Spleen (tissue), 13 donors: ENCODE measurements at regions of chr22 and their contacts with region 1.

Region 1: DNA sequence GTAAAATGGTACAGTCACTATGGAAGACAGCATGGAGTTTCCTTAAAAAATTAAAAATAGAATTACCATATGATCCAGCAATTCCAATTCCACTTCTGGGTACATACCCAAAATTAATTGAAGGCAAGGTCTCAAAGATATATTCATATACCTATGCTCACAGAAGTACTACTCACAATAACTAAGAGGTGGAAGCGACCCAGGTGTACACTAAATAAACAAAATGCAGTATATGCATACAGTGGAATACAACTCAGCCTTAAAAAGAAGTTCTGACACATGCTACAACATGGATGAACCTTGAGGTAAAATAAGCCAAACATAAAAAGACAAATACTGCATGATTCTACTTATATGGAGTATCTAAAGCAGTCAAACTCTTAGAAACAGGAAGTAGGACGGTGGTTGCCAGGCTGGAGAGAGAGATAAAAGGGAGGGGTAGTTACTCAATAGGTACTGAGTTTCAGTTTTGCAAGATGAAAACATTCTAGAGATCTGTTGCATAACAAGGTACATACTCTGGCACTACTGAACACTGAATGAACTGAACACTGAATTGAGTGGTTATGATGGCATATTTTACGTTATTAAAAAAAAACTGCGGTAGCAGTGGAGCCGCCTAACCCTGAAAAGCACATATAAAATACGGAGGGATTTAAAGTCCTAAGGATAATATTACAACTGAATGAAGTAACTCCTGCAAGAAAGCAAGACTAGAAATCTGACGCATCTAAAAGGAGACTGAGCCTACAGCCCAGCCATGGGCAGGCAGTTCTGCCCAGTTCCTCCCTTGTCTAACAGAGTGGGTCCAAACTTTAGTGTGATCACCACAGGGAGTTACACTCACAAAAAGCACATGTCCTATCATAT is 12.8 kb downstream of the DGCR2 start:
- DNase-seq: no peak
- H3K4me3 ChIP-seq: peak overlapping the region in 3 of 8 donors; percentile 5 to 50 (median 6)
- H3K27ac ChIP-seq: peak overlapping the region; percentile 75 to 95 (median 86)
- H3K4me1 ChIP-seq: peaks cover 18 to 100% (median 62%) of the 10 kb centered on the region in 6 donors
- H3K27me3 ChIP-seq: no peaks in the 10 kb centered on the region
- CTCF ChIP-seq: no peak
- POLR2A ChIP-seq: no peak

Region 2: GRCh38 chr22:19168211-19168890 is 58.9 kb after region 1 on chr22:
- intact Hi-C with region 1: loop called (anchors 10 kb)
- DNase-seq: no peak
- H3K4me3 ChIP-seq: no peak overlapping the region
- H3K27ac ChIP-seq: no peak overlapping the region
- H3K4me1 ChIP-seq: peaks cover 16 to 44% (median 40%) of the 10 kb centered on the region in 6 donors
- H3K27me3 ChIP-seq: peaks cover 0 to 77% (median 28%) of the 10 kb centered on the region in 7 donors
- CTCF ChIP-seq: no peak
- POLR2A ChIP-seq: no peak